ENCODE measurements at regions of chr11 and their contacts with region 1.

Region 1: GRCh38 chr11:9573052-9573774 is at the start of gene WEE1:
- DNase-seq: peak; percentile 94

Region 2: DNA sequence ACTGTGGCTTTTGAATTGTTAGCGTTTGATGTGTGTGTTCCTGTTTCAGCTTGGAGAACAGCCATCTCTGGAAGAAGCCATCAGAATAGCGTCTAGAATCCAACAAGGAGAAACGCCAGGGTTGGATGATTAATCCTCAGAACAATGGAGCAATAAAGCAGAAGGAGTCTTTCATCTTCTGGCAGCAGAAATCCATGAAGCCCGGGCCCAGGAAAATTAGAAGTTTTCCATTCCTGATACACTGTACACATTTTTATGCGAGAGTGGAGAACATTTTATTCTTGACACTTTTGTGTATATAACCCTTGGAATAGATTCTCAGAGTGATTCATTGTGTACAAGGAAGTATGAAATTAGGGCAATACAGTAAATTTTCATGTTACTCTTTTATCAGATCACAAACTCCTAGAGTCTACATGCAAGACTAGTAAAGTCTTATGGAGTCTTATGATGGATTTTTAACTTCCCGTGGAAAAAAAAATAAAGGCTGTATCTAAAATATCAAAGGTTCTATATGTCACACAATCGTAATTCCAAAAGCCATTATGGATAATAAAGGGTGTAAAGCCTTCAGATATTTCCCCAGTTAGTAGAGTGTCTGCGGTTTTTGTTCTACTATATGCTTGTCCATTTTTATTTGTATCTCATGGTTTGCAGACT is 45.6 kb before region 1 on chr11:
- CTCF ChIA-PET with region 1: no interaction called
- POLR2A ChIA-PET with region 1: interaction called, 19 read pairs
- DNase-seq: no peak

Region 3: GRCh38 chr11:9534791-9535781 is 38.1 kb before region 1 on chr11:
- CTCF ChIA-PET with region 1: interaction called, 5 read pairs
- POLR2A ChIA-PET with region 1: interaction called, 25 read pairs
- DNase-seq: peak; percentile 71

Region 4: DNA sequence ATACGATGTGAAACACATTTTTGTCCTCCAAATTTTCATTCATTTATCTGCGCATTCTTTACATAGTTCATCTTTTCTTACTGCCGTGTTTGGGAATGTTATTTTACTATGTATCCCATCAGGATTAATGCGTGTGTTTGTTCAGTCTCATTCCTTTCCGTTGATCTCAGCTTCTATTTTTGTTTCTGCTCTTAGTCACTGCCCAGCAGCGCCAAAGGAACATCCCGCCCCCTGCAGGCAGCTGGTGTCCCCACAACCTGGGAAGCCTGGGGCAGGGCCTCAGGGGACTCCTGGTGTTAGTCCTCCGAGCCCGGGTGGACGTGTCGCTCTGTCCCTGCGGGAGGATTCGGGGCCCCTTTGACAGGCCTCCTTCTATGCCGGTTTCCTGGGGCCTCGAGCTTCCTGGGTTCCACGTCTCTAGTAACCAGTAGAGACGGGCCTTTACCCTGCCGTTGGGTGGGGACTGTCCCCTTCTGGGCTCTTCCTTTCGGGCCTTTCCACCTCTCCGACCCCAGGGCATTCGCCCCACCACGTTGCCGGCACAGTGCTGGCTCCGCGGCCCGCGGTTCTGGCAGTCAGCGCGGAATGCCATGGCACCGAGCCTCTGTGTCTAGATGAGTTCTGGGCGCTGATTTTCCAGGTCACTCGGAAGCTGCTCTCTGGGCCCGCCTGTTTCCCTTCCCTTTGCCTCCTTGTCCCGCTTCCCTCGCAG is 40.1 kb after region 1 on chr11:
- CTCF ChIA-PET with region 1: interaction called, 4 read pairs
- POLR2A ChIA-PET with region 1: interaction called, 25 read pairs
- DNase-seq: peak; percentile 94

Region 5: DNA sequence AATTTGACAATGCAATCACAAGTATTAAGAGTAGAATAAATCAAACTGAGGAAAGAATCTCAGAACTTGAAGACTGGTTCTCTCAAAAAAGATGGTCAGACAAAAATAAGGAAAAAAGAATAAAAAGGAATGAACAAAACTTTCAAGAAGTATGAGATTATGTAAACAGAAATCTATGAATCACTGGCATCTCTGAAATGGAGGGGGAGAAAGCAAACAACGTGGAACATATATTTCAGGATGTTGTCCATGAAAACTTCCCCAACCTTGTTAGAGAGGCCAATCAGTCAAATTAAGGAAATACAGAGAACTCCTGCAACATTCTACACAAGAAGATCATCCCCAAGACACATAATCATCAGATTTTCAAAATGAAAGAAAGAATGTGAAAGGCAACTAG is 485.1 kb after region 1 on chr11:
- CTCF ChIA-PET with region 1: no interaction called
- POLR2A ChIA-PET with region 1: no interaction called
- DNase-seq: no peak

Measured in HEK293T (cell line).